ENCODE measurements at regions of chr20 and their contacts with region 1.

Region 1: GRCh38 chr20:50153485-50154377 is at the start of gene PEDS1:
- DNase-seq: peak; percentile 88
- H3K4me3 Mint-ChIP-seq: peak within 1 kb of the TSS; percentile 81
- H3K27ac Mint-ChIP-seq: peak within 1 kb of the TSS; percentile 78
- H3K4me1 Mint-ChIP-seq: peaks cover 48% of the 10 kb centered on the region
- H3K27me3 Mint-ChIP-seq: no peaks in the 10 kb centered on the region
- total RNA-seq, gene PEDS1: 30.3 to 32.3 TPM

Region 2: GRCh38 chr20:50034567-50035208 is 119.0 kb before region 1 on chr20:
- CTCF ChIA-PET with region 1: no interaction called
- POLR2A ChIA-PET with region 1: no interaction called
- DNase-seq: no peak
- H3K4me3 Mint-ChIP-seq: no peak overlapping the region
- H3K27ac Mint-ChIP-seq: no peak overlapping the region
- H3K4me1 Mint-ChIP-seq: no peaks in the 10 kb centered on the region
- H3K27me3 Mint-ChIP-seq: peaks cover 2% of the 10 kb centered on the region

Region 3: GRCh38 chr20:50115591-50116372 is 37.9 kb before region 1 on chr20:
- CTCF ChIA-PET with region 1: interaction called, 55 read pairs
- POLR2A ChIA-PET with region 1: interaction called, 73 read pairs
- DNase-seq: peak; percentile 91
- H3K4me3 Mint-ChIP-seq: peak overlapping the region; percentile 80
- H3K27ac Mint-ChIP-seq: peak overlapping the region; percentile 85
- H3K4me1 Mint-ChIP-seq: peaks cover 52% of the 10 kb centered on the region
- H3K27me3 Mint-ChIP-seq: no peaks in the 10 kb centered on the region

Region 4: DNA sequence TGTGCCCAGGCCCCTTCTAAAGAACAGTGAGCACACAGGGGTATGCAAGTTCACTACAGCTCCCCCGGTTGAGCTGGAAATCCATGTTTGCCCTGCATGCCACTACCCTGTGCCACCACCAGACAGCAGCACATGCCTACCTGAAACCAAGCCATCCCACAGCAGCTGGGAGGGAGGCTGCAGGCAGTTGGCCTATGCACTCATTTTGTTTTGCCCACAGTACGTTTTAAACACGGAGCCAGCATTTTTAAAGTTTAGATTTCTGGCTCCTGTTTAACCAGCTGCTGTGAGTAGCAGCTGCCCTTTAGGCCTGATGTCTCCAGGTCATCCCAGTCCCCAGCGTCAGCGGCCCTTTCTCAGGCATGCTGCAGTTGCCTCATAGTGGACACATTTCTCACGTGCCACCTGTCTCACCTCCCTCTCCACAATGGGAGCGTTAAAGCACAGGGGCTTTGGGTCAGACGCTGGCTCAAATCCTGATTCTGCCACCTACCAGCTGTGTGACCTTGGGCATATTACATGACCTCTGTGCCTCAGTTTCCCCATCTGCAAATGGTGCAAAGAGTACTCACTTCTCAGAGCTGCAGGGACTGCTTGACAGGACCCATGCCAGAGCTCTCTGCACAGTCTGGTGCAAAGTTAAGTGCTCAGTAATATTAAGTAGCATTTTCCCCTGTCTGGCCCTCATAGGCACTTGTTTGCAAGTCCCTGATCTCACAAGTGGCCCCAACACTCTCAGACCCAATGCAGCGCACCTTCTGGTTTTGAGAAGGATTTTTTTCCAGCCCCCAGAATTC is 32.6 kb before region 1 on chr20:
- CTCF ChIA-PET with region 1: interaction called, 55 read pairs
- POLR2A ChIA-PET with region 1: interaction called, 73 read pairs
- DNase-seq: peak; percentile 72
- H3K4me3 Mint-ChIP-seq: no peak overlapping the region
- H3K27ac Mint-ChIP-seq: no peak overlapping the region
- H3K4me1 Mint-ChIP-seq: peaks cover 8% of the 10 kb centered on the region
- H3K27me3 Mint-ChIP-seq: no peaks in the 10 kb centered on the region

Region 5: GRCh38 chr20:50133474-50134217 is 20.1 kb before region 1 on chr20:
- CTCF ChIA-PET with region 1: interaction called, 10 read pairs
- POLR2A ChIA-PET with region 1: interaction called, 12 read pairs
- DNase-seq: no peak
- H3K4me3 Mint-ChIP-seq: no peak overlapping the region
- H3K27ac Mint-ChIP-seq: no peak overlapping the region
- H3K4me1 Mint-ChIP-seq: peaks cover 2% of the 10 kb centered on the region
- H3K27me3 Mint-ChIP-seq: no peaks in the 10 kb centered on the region

Region 6: DNA sequence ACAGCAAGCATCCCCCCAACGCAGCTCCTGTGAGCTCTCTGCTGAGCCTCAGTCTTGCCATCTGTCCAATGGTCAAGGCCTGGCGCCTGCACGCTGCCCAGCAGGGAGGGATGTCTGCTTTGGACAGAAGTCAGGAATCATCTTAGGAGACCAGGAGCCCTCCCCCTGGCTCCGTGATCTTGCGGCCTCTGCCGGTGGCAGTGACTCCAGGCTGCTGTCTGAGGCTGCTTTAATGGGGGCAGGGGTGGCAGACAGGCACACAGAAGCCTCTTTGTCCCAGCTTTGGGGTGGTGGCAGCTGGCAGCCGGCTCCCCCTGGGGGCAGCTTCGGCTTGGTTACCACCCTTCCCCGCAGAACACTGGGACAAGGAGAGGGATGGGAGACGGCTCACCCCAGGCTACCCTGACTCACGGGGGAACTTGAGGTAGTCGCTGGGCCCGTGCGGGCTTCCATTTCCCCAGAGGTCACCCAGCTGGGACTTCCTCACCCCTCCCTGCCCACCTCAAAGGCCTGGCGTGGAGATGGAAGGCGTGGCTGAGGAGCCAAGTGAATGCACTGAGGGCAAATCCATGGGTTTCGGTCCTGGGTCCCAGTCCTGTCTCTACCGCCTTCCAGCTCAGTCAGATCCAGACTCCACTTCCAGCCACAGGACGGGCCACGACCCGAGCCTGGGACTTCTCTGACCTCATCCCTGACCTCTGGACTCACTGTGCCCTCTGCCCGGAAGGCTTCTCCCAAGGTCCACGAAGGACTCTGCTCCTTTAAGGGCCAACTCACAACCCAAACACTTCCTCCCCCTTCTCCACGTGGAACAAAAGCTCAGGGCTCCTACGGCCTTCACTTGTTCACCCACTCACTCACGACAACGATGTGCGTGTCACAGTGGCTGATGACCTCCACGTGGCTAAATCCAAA is 15.0 kb before region 1 on chr20:
- CTCF ChIA-PET with region 1: interaction called, 10 read pairs
- POLR2A ChIA-PET with region 1: interaction called, 17 read pairs
- DNase-seq: no peak
- H3K4me3 Mint-ChIP-seq: no peak overlapping the region
- H3K27ac Mint-ChIP-seq: peak overlapping the region; percentile 3
- H3K4me1 Mint-ChIP-seq: peaks cover 26% of the 10 kb centered on the region
- H3K27me3 Mint-ChIP-seq: no peaks in the 10 kb centered on the region

Measured in activated CD4-positive, alpha-beta memory T cell treated with anti-CD3 and anti-CD28 coated beads, Interleukin-2, amount 10 ng/mL, durations not matched to agents 7 days and 5 days (primary cell).